H1 (cell line): ENCODE measurements at regions of chr3 and their contacts with region 1.

Region 1: GRCh38 chr3:131491775-131492174 is 11.0 kb downstream of the MRPL3 start:
- DNase-seq: no peak
- H3K4me3 ChIP-seq: no peak overlapping the region
- H3K27ac ChIP-seq: no peak overlapping the region
- H3K4me1 ChIP-seq: no peaks in the 10 kb centered on the region
- H3K27me3 ChIP-seq: no peaks in the 10 kb centered on the region
- CTCF ChIP-seq: no peak
- EP300 ChIP-seq: no peak
- POLR2A ChIP-seq: no peak
- RAD21 ChIP-seq: no peak

Region 2: GRCh38 chr3:131421957-131422498 is 69.7 kb before region 1 on chr3:
- CTCF ChIA-PET with region 1: no interaction called
- POLR2A ChIA-PET with region 1: no interaction called
- DNase-seq: no peak
- H3K4me3 ChIP-seq: no peak overlapping the region
- H3K27ac ChIP-seq: no peak overlapping the region
- H3K4me1 ChIP-seq: no peaks in the 10 kb centered on the region; a peak in 2 of 7 replicates
- H3K27me3 ChIP-seq: no peaks in the 10 kb centered on the region
- CTCF ChIP-seq: no peak
- EP300 ChIP-seq: no peak
- POLR2A ChIP-seq: no peak
- RAD21 ChIP-seq: no peak

Region 3: GRCh38 chr3:131502530-131503245 is 10.9 kb after region 1 on chr3 and contains the start of gene MRPL3:
- CTCF ChIA-PET with region 1: no interaction called
- POLR2A ChIA-PET with region 1: interaction called, 19 read pairs
- DNase-seq: peak; percentile 70 to 86
- H3K4me3 ChIP-seq: peak within 1 kb of the TSS; percentile 91 to 97 (median 95)
- H3K27ac ChIP-seq: peak within 1 kb of the TSS; percentile 94
- H3K4me1 ChIP-seq: no peaks in the 10 kb centered on the region
- H3K27me3 ChIP-seq: peaks cover 0 to 16% (median 8%) of the 10 kb centered on the region in 4 experiments; a peak in 6 of 7 replicates
- CTCF ChIP-seq: no peak
- EP300 ChIP-seq: peak in 1 of 2 experiments; percentile 67; a peak in 1 of 3 replicates
- POLR2A ChIP-seq: peak; percentile 81 to 83
- RAD21 ChIP-seq: peak in 1 of 2 experiments; percentile 12; a peak in 1 of 4 replicates
- total RNA-seq, gene MRPL3: 164 and 175 TPM in 2 replicates